ENCODE measurements at regions of chr2 and their contacts with region 1.

Region 1: DNA sequence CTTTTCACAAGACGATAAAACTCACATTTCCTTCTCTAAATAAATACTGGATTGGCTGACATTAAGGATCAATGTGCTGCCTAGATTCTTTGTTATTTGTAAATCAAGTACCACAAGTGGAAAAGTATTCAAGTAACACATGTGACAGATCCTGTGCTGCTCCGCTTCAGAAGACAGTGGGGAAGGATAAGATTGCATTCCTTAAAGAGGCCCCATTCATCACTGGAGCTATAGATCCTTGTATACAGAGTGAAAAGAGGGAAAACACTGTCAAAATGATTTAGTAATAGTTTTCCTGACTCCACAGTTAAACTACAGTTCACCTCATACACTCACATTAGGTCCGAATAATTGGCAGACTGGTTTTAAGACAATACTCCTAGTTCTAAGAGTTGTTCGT is 108.0 kb upstream of the CSRNP3 start:
- DNase-seq: no peak
- ATAC-seq: no peak
- H3K4me3 ChIP-seq: no peak overlapping the region
- H3K27ac ChIP-seq: no peak overlapping the region
- H3K4me1 ChIP-seq: no peaks in the 10 kb centered on the region
- H3K27me3 ChIP-seq: no peaks in the 10 kb centered on the region
- CTCF ChIP-seq: no peak
- EP300 ChIP-seq: no peak
- POLR2A ChIP-seq: no peak
- RAD21 ChIP-seq: no peak

Region 2: GRCh38 chr2:164485541-164485940 is 876.0 kb before region 1 on chr2:
- CTCF ChIA-PET with region 1: no interaction called
- POLR2A ChIA-PET with region 1: no interaction called
- in situ Hi-C with region 1: no loop called
- intact Hi-C with region 1: no loop called
- DNase-seq: no peak
- ATAC-seq: no peak
- H3K4me3 ChIP-seq: no peak overlapping the region
- H3K27ac ChIP-seq: no peak overlapping the region
- H3K4me1 ChIP-seq: no peaks in the 10 kb centered on the region
- H3K27me3 ChIP-seq: no peaks in the 10 kb centered on the region
- CTCF ChIP-seq: no peak
- EP300 ChIP-seq: no peak
- POLR2A ChIP-seq: no peak
- RAD21 ChIP-seq: no peak

Region 3: DNA sequence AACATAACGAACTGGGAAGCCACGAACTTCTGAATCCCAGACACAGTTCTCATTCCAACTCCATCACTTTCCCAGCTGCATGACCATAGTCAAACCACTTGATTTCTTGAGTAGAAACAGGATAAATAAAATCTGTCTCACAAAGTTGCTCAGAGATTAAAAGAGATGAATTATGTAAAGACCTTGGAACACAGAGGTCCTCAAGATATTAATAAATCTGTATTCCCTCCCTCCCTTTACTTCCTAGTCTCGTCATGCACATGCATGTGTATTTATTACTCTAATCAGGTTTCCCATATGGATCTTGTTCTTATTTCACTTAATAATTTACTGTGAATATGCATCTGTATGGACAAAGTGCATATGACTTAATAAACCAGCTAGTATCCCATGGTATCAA is 86.9 kb after region 1 on chr2:
- CTCF ChIA-PET with region 1: no interaction called
- POLR2A ChIA-PET with region 1: no interaction called
- in situ Hi-C with region 1: no loop called
- intact Hi-C with region 1: loop called (anchors 5 kb)
- DNase-seq: no peak
- ATAC-seq: no peak
- H3K4me3 ChIP-seq: no peak overlapping the region
- H3K27ac ChIP-seq: no peak overlapping the region
- H3K4me1 ChIP-seq: no peaks in the 10 kb centered on the region
- H3K27me3 ChIP-seq: no peaks in the 10 kb centered on the region
- CTCF ChIP-seq: no peak
- EP300 ChIP-seq: no peak
- POLR2A ChIP-seq: no peak
- RAD21 ChIP-seq: no peak